ENCODE measurements at regions of chr18 and their contacts with region 1.

Region 1: GRCh38 chr18:62584241-62585120 is 61.7 kb downstream of the ZCCHC2 start:
- DNase-seq: peak; percentile 93
- H3K4me3 ChIP-seq: no peak overlapping the region
- H3K27ac ChIP-seq: no peak overlapping the region
- H3K4me1 ChIP-seq: no peaks in the 10 kb centered on the region
- H3K27me3 ChIP-seq: no peaks in the 10 kb centered on the region
- CTCF ChIP-seq: peak; percentile 97

Region 2: DNA sequence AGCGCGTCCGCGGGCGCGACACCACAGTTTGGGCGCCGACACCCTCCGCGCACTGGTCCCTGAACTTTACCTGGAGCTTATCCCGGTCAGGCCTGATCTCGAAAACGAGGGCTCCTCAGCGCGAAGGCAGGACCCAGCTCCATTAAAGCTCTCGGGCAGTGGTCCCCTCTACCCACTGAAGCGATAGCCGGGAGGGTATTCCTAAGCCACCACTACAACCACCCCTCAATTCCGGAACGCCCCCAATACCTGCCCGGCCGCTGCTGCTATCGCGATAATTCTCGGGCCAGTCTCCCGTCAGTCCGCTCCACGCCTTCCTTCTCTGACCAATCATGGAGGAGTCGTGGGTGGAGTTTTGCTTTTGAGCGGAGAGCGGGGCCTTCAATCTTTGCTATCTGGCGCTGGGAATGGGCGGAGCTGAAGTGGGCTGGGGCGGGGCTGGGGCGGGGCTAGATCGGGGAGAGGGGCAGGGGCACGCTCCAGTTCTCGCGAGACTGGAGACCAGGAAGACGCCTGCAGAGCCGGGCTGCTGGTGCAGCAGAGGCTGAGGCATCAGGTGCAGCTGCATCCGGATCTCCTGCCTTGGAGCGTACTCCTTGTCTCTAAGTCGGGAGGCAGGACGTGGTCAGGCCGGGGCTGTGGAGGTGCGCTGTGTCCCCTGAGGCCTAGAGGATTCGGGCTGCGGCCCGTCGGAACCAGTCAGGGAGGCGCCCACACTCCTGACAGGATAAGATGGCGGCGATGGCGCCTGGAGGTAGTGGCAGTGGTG is 397.5 kb before region 1 on chr18 and contains the starts of genes PIGN and RELCH:
- CTCF ChIA-PET with region 1: no interaction called
- POLR2A ChIA-PET with region 1: no interaction called
- intact Hi-C with region 1: loop called (anchors 1 kb)
- DNase-seq: peak; percentile 99
- H3K4me3 ChIP-seq: peak within 1 kb of the TSS; percentile 98
- H3K27ac ChIP-seq: peak within 1 kb of the TSS; percentile 74
- H3K4me1 ChIP-seq: peaks cover 18% of the 10 kb centered on the region
- H3K27me3 ChIP-seq: no peaks in the 10 kb centered on the region
- CTCF ChIP-seq: no peak
- total RNA-seq, gene PIGN: 21.3 and 23.8 TPM in 2 replicates
- total RNA-seq, gene RELCH: 29.2 and 31.6 TPM in 2 replicates

Region 3: DNA sequence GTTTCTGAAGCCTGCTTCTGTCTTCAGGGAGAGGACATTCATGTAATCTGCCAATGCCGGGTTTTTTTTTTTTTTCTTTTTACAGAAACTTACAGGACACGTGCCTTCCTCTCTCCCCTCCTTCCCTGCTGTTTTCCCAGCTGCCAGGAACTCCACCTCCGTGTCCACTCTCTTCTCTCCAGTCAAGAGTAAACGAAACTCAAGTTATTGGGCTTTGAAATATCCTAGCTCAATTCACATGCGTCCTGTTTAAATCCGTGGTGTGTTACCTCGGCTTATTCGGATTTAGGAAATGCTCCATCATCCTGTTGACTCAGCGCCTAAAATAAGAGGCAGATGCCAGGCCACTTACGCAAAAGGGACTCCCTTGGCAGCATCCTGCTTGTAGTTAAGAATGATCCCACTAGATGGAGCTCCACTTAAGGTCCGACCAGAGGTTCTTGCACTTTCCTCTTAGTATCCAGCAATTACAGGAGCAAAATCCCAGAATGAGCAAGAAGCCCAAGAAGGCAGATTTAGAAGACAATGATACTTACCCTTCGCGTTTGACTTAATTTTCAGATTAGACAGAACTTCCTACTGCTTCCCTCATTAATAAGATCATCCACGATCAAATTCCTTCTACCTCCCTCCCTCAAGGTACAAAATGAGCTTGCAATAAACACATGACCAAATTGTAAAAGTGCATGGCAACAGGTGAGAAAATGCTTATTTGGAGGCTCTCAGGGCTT is 158.9 kb before region 1 on chr18:
- CTCF ChIA-PET with region 1: interaction called, 6 read pairs
- POLR2A ChIA-PET with region 1: no interaction called
- intact Hi-C with region 1: loop called (anchors 1 kb)
- DNase-seq: peak; percentile 94
- H3K4me3 ChIP-seq: peak overlapping the region; percentile 16
- H3K27ac ChIP-seq: no peak overlapping the region
- H3K4me1 ChIP-seq: peaks cover 5% of the 10 kb centered on the region
- H3K27me3 ChIP-seq: no peaks in the 10 kb centered on the region
- CTCF ChIP-seq: peak; percentile 88

Region 4: DNA sequence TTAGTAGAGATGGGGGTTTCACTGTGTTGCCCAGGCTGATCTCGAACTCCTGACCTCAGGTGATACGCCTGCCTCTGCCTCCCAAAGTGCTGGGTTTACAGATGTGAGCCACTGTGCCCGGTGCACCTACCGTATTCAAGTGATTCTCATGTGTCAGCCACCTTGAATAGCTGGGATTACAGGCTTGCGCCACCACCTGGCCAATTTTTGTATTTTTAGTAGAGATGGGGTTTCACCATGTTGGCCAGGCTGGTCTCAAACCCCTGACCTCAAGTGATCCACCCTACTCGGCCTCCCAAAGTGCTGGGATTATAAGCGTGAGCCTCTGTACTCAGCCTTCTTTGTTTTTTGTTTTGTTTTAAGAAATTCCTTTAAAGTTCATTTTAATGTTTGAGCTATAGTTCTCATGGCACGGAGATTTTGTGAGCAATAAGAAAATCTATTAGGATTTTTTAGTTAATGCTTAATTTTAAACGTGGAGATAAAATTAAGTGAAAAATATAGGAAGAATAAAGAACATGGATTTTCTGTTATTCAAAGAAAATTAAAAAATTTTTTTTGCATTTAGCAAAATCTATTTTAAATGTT is 373.5 kb after region 1 on chr18:
- CTCF ChIA-PET with region 1: interaction called, 9 read pairs
- POLR2A ChIA-PET with region 1: no interaction called
- intact Hi-C with region 1: loop called (anchors 1 kb)
- DNase-seq: peak; percentile 54
- H3K4me3 ChIP-seq: no peak overlapping the region
- H3K27ac ChIP-seq: no peak overlapping the region
- H3K4me1 ChIP-seq: no peaks in the 10 kb centered on the region
- H3K27me3 ChIP-seq: no peaks in the 10 kb centered on the region
- CTCF ChIP-seq: peak; percentile 58

Region 5: DNA sequence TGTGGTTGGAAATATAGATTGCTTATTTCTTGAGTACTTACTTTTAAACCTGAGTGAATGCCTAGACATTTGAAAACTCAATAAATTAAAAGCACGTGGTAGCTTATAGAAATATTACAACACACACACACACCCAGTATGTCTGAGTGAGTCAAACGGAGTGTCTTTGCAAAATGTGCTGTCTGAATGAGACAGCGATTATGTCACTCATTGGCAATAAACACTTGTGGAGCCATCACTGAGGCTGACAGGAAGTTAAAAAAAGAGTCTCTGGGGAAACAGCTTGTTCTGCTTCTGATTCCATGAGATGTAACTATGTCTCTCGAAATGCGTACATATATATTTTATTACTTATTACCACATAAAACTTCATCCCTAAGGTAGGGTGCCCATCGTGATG is 860.1 kb after region 1 on chr18:
- CTCF ChIA-PET with region 1: interaction called, 7 read pairs
- POLR2A ChIA-PET with region 1: no interaction called
- intact Hi-C with region 1: loop called (anchors 10 kb)
- DNase-seq: peak; percentile 85
- H3K4me3 ChIP-seq: no peak overlapping the region
- H3K27ac ChIP-seq: peak overlapping the region; percentile 4
- H3K4me1 ChIP-seq: peaks cover 20% of the 10 kb centered on the region
- H3K27me3 ChIP-seq: no peaks in the 10 kb centered on the region
- CTCF ChIP-seq: no peak

Measured in A673 (cell line).